Activated CD8-positive, alpha-beta T cell treated with anti-CD3 and anti-CD28 coated beads for 36 hours (primary cell): ENCODE measurements at regions of chr16 and their contacts with region 1.

Region 1: GRCh38 chr16:76653390-76654026 is 376.3 kb downstream of the CNTNAP4 start:
- DNase-seq: peak; percentile 4
- ATAC-seq: no peak
- H3K4me3 Mint-ChIP-seq: no peak overlapping the region
- H3K27ac Mint-ChIP-seq: no peak overlapping the region
- H3K4me1 Mint-ChIP-seq: no peaks in the 10 kb centered on the region
- H3K27me3 Mint-ChIP-seq: no peaks in the 10 kb centered on the region
- CTCF ChIP-seq: no peak

Region 2: DNA sequence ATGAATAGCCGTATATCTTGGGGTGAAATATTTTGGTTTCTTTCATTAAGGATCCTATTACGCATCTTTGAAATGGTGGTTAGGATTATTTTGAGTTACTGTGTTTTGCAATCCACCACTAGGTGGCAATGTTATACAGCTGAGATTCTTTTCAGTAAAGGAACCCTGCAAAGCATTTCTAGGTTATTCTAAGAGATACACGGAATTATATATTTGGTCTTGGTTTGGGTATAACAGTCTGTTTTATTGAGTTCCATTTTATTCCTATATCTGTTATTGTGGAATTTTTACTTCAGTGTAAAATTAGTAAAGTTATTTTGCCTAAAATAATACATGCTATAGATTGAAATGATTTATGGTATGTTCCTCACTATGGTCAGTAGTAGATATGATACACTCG is 864.3 kb before region 1 on chr16:
- CTCF ChIA-PET with region 1: no interaction called
- POLR2A ChIA-PET with region 1: no interaction called
- intact Hi-C with region 1: loop called (anchors 10 kb)
- DNase-seq: no peak
- ATAC-seq: peak; percentile 51
- H3K4me3 Mint-ChIP-seq: no peak overlapping the region
- H3K27ac Mint-ChIP-seq: no peak overlapping the region
- H3K4me1 Mint-ChIP-seq: no peaks in the 10 kb centered on the region
- H3K27me3 Mint-ChIP-seq: peaks cover 8% of the 10 kb centered on the region
- CTCF ChIP-seq: peak; percentile 83